ENCODE measurements at regions of chr10 and their contacts with region 1.

Region 1: DNA sequence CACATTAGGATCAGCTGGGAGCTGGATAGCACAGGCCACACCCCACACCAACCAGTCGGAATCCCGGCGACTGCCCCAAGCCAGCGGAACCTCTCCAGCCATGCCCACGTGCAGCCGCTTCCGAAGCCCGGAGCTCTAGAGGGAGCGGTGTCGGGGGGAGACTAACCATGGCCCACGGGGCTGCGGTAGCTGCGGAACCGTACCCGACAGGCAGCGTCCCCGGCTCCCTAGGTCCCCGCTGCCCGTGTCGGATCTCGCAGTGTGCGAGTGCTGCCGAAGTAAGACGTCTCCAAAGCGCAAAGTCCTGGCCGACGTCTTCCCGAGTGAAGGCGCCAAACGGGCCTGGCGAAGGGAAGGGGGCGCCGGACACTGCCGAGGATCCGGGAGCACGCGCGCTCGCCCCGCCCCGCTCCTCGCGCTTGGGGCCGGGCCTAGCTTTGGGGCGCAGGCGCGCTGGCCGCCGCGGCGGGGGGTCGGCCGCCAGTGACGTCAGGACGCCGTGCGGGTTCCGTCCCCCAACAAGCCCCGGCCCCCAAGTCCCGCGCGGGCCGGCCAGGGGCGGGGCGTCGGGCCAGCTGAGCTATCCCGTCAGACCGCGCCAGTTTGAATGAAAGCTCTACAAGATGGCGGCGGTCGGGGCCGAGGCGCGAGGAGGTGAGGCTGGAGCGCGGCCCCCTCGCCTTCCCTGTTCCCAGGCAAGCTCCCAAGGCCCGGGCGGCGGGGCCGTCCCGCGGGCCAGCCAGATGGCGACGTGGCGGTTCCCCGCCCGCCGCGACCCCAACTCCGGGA is at the start of gene SUV39H2:
- DNase-seq: peak; percentile 95
- ATAC-seq: peak; percentile 80
- H3K4me3 Mint-ChIP-seq: peak within 1 kb of the TSS; percentile 94
- H3K27ac Mint-ChIP-seq: peak within 1 kb of the TSS; percentile 97
- H3K4me1 Mint-ChIP-seq: peaks cover 43% of the 10 kb centered on the region
- H3K27me3 Mint-ChIP-seq: no peaks in the 10 kb centered on the region
- CTCF ChIP-seq: no peak
- total RNA-seq, gene SUV39H2: 36.4 to 41.4 TPM (median 39.9 TPM) in 3 replicates

Region 2: DNA sequence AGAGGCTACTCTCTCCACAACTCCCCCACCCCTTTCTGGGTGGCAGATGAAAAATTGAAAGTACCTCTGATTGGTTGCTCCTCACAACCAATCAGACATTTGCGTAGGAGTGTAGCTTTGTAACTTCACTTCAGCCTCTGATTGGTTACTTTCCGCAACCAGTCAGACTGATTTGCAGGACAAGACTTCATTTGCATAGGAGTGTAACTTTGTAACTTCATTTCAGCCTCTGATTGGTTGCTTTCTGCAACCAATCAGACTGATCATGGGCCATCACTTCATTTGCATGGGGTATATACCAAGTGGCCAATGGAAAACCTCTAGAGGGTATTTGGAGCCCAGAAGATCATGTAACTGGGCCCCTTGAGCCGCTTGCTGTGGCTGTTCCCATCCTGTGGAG is 66.2 kb before region 1 on chr10:
- CTCF ChIA-PET with region 1: no interaction called
- POLR2A ChIA-PET with region 1: no interaction called
- DNase-seq: no peak
- ATAC-seq: peak; percentile 43
- H3K4me3 Mint-ChIP-seq: no peak overlapping the region
- H3K27ac Mint-ChIP-seq: no peak overlapping the region
- H3K4me1 Mint-ChIP-seq: peaks cover 13% of the 10 kb centered on the region
- H3K27me3 Mint-ChIP-seq: no peaks in the 10 kb centered on the region
- CTCF ChIP-seq: no peak

Region 3: DNA sequence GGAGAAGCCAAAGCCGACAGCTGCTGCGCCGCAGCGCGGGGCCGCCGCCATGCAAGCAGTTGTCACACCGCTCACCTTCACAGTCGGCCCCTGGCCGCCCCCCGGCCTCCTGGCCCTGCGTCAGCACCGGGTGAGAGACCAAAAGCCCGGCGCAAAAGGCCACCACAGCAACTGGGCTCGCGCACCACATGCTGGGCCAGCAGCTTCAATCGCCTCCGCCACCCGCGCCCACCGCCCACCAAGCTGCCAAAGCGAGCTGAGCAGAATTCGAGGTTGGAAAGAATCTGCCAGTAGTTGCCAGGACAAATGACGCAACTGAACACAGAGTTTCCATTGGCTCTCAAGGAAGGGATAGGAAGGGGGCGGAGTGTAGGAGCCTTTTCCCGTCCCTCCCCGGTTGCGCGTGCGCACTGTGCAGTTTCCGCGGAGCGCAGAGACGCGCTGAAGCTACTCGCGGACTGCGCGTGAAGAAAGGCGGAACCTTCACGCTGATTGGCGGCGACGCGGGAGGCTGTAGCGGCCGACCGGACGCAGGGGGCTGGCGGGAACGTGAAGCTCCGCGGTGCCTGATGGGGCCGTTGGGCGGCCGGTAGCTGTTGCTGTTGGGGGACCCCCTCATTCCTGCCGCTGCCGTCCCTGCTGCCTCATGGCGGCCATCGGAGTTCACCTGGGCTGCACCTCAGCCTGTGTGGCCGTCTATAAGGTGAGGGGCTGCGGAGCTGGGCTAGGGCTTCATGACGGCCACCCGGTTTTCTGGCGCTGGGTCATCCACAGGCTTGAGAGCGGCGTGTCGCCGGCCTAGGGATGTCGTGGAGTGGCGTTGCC is 40.5 kb before region 1 on chr10 and contains the starts of genes CDNF, HSPA14 and MSANTD7:
- CTCF ChIA-PET with region 1: interaction called, 11 read pairs
- POLR2A ChIA-PET with region 1: interaction called, 75 read pairs
- DNase-seq: peak; percentile 99
- ATAC-seq: peak; percentile 97
- H3K4me3 Mint-ChIP-seq: peak within 1 kb of the TSS; percentile 91
- H3K27ac Mint-ChIP-seq: peak within 1 kb of the TSS; percentile 97
- H3K4me1 Mint-ChIP-seq: peaks cover 24% of the 10 kb centered on the region
- H3K27me3 Mint-ChIP-seq: no peaks in the 10 kb centered on the region
- CTCF ChIP-seq: no peak
- total RNA-seq, gene CDNF: 0.27 to 1.4 TPM (median 0.41 TPM) in 3 replicates
- total RNA-seq, gene HSPA14: 26.1 to 30.1 TPM (median 27.1 TPM) in 3 replicates
- total RNA-seq, gene MSANTD7: 13.9 to 14.6 TPM (median 14.3 TPM) in 3 replicates

Region 4: DNA sequence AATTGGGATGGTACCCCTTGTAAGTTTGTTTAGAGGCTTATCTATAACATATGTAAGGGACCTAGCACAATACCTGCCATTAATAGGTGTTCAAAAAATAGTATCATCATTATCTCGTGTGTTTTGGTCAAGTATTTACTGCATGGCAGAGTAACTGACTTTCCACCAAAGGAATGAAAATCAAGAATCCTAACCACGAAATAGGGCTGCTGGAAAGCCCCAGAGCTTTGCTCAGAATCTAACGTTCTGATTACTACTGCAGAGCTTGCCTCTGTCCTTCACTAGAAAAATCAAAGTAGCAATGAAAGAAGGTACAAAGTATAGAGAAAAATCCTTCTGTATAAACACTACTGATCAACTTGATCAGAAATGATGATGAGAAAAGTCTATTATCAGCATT is 40.5 kb after region 1 on chr10:
- CTCF ChIA-PET with region 1: no interaction called
- POLR2A ChIA-PET with region 1: no interaction called
- DNase-seq: no peak
- ATAC-seq: no peak
- H3K4me3 Mint-ChIP-seq: no peak overlapping the region
- H3K27ac Mint-ChIP-seq: no peak overlapping the region
- H3K4me1 Mint-ChIP-seq: no peaks in the 10 kb centered on the region
- H3K27me3 Mint-ChIP-seq: no peaks in the 10 kb centered on the region
- CTCF ChIP-seq: no peak

Measured in WTC11 (cell line).